ENCODE measurements at regions of chr17 and their contacts with region 1.

Region 1: GRCh38 chr17:2521257-2521656 is 9.6 kb upstream of the METTL16 start:
- DNase-seq: no peak
- H3K4me3 ChIP-seq: no peak overlapping the region
- H3K27ac ChIP-seq: no peak overlapping the region
- H3K27me3 ChIP-seq: no peaks in the 10 kb centered on the region
- CTCF ChIP-seq: no peak

Region 2: GRCh38 chr17:2484876-2485275 is 36.4 kb before region 1 on chr17:
- intact Hi-C with region 1: loop called in 1 of 2 experiments (anchors 5 kb)
- DNase-seq: peak in 1 of 10 donors; percentile 5
- H3K4me3 ChIP-seq: no peak overlapping the region
- H3K27ac ChIP-seq: peak overlapping the region in 21 of 59 donors; percentile 8 to 96 (median 38)
- H3K27me3 ChIP-seq: no peaks in the 10 kb centered on the region
- CTCF ChIP-seq: no peak

Measured in dorsolateral prefrontal cortex (tissue), 120 donors.